Activated T-helper 1 cell treated with anti-CD3 and anti-CD28 coated beads, Interleukin-12 subunit alpha, Interleukin-12 subunit beta, Interleukin-2, Interleukin-4 antibody, amounts not matched to agents 30 ng/mL and 10 ng/mL and 1 ng/mL, durations not matched to agents 14 hours and 24 hours and 36 hours (primary cell): ENCODE measurements at regions of chr15 and their contacts with region 1.

Region 1: DNA sequence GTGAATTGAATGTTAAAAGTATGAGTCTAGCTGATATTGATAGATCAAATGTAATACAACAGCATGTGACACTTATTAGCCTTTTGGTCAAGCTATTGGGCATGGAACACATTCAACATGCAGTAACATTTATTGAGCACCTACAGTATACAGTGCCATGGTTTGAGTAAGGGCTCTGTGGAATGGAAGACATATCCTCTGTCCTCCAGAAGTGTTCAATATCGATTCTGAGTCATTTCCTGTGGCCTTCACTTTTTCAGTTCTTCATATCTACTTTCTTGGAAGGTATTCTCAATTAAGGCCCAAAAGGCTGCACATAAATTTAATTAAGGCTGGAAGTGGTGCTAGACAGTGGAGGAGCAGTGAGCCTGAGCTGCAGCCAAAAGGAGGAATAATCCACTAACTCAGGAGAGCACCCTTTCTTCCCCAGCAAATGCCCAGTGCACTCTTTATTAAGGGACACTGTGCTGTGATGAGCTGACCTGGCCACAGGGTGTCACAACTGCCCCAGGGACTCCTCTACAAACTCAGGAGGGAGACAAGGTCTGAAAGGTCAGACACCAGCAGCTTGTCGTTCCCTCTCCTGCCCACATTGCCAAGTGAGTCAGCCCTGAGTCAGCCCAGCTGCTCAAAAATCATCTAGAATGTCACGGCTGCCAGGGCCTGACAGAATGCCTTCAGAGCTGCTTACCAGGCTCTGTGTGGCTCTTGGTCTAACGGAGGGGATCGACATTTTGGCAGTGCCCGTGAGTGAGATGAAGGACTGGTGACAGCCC is 544.8 kb downstream of the AGBL1 start:
- DNase-seq: peak; percentile 20
- H3K4me3 Mint-ChIP-seq: peak overlapping the region; percentile 16
- H3K27ac Mint-ChIP-seq: no peak overlapping the region
- H3K4me1 Mint-ChIP-seq: peaks cover 17% of the 10 kb centered on the region
- H3K27me3 Mint-ChIP-seq: peaks cover 5% of the 10 kb centered on the region

Region 2: DNA sequence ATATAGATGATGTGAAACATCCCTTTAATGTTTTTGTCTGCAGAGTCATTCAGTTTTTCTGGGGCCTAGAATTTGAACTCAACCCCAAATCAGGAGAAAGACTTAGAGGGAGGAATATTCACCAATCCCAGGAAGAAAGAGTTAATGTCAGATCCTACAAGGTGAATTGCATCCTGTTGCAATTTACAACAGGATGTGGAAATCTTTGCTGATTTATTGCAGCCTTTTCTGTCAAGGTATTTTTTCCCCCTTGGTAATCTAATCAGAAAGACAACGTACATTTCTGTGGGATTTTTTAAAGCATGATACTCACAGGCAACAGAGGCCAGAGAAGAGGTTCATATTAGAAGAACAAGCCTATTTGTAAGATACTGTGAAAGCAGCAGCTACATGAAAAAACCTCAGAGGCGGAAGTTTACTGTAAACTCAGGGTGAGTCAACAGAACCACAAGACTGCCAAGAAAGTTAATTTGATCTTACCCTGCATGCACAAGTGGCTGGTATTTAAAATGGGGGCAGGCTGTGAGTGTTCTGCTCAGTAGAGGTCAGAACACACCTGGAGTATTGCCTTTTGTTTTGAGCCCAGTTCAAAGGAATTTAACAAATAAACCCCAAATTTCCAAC is 12.9 kb before region 1 on chr15:
- intact Hi-C with region 1: loop called (anchors 1 kb)
- DNase-seq: peak; percentile 36
- H3K4me3 Mint-ChIP-seq: no peak overlapping the region
- H3K27ac Mint-ChIP-seq: peak overlapping the region; percentile 47
- H3K4me1 Mint-ChIP-seq: peaks cover 42% of the 10 kb centered on the region
- H3K27me3 Mint-ChIP-seq: no peaks in the 10 kb centered on the region

Region 3: DNA sequence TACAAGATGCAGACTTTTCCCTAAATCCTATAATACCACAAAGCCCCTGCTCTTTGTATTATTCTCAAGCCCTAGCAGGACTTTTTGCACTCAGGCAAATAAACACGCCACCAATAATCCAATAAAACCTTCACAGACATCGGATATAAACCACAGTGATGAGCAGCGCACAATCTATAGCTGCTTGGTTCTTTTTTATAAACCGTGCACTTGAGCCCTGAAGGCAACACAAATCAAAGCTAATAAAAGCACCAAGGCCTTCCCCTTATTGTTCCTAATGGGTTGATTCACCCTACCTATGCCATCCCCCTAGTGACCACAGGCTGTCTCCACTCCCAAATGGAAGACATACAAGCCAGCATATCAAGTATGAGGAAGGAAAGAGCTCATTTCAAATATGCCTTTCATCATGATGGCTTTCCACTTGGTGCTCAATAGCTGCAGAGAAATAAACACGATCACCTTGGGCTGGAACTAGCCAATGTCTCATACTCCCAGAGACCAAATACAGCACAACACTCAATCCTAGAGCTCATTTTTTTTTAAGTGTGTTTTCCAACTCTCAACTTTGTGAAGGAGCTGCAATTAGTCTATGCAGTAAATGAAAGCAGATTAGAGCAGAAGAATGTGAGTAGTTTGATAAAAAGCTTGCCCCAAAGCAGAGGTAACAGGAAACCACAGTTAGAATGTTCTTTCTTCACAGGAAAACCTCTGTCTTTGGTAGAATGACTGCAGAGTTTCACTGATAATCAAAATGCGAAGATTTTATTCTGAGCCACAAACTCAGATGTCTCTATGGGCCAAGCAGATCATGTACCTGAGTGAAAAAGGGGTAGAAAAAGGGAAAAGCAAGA is 29.1 kb after region 1 on chr15:
- intact Hi-C with region 1: loop called (anchors 1 kb)
- DNase-seq: no peak
- H3K4me3 Mint-ChIP-seq: peak overlapping the region; percentile 34
- H3K27ac Mint-ChIP-seq: peak overlapping the region; percentile 88
- H3K4me1 Mint-ChIP-seq: peaks cover 37% of the 10 kb centered on the region
- H3K27me3 Mint-ChIP-seq: peaks cover 1% of the 10 kb centered on the region

Region 4: GRCh38 chr15:86677278-86677677 is 52.8 kb after region 1 on chr15:
- intact Hi-C with region 1: no loop called
- DNase-seq: no peak
- H3K4me3 Mint-ChIP-seq: no peak overlapping the region
- H3K27ac Mint-ChIP-seq: no peak overlapping the region
- H3K4me1 Mint-ChIP-seq: no peaks in the 10 kb centered on the region
- H3K27me3 Mint-ChIP-seq: no peaks in the 10 kb centered on the region

Region 5: GRCh38 chr15:86691091-86691663 is 66.7 kb after region 1 on chr15:
- intact Hi-C with region 1: loop called (anchors 10 kb)
- DNase-seq: no peak
- H3K4me3 Mint-ChIP-seq: no peak overlapping the region
- H3K27ac Mint-ChIP-seq: no peak overlapping the region
- H3K4me1 Mint-ChIP-seq: no peaks in the 10 kb centered on the region
- H3K27me3 Mint-ChIP-seq: no peaks in the 10 kb centered on the region

Region 6: DNA sequence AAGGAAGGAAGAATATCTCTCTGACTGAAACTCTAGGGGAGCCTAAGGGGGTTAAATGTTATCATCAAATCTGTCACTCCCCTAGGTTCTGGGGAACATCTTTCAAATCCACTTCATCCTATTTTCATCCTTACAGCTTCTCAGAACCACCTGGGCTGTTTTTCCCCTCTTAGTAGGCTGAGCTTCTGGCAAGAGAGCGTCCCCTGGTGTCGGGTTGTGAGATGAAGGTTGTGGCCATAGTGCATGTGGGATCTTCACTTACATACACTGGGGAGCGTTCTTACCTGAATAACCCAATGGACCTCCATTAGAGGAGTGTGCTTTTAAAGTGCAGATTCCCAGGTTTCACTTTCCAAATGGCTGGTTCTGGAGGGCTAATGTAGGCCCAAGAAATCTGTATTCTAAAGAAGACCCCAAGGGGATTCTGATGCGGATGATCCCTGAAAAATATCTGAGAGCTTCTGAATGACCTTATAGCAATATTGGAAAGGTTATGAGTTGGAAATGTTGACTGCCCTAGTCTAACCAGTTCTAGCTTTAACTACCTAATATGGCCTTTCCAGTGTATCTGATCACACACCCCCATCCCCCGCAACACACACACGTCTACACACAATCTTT is 118.9 kb after region 1 on chr15:
- intact Hi-C with region 1: loop called (anchors 1 kb)
- DNase-seq: peak; percentile 9
- H3K4me3 Mint-ChIP-seq: no peak overlapping the region
- H3K27ac Mint-ChIP-seq: no peak overlapping the region
- H3K4me1 Mint-ChIP-seq: no peaks in the 10 kb centered on the region
- H3K27me3 Mint-ChIP-seq: no peaks in the 10 kb centered on the region

Region 7: DNA sequence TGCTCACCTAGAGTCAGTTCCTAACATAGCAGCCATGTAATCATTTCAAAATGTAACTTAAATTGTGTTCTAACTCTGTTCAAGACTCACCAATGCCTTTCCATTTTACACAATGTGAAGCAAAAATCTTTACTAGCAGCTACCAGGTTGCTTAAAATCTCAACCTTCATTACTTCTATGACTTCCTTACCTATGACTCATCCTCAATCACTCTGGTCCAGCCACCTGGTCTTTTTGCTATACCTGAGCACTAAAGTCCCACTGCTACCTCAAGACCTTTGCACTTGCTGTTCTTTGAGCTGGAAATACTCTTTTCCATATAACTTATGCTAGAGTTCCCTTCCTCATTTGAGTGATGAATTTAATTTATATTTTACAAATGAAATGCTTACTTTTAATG is 638.8 kb after region 1 on chr15:
- intact Hi-C with region 1: no loop called
- DNase-seq: no peak
- H3K4me3 Mint-ChIP-seq: no peak overlapping the region
- H3K27ac Mint-ChIP-seq: no peak overlapping the region
- H3K4me1 Mint-ChIP-seq: no peaks in the 10 kb centered on the region
- H3K27me3 Mint-ChIP-seq: no peaks in the 10 kb centered on the region

Region 8: DNA sequence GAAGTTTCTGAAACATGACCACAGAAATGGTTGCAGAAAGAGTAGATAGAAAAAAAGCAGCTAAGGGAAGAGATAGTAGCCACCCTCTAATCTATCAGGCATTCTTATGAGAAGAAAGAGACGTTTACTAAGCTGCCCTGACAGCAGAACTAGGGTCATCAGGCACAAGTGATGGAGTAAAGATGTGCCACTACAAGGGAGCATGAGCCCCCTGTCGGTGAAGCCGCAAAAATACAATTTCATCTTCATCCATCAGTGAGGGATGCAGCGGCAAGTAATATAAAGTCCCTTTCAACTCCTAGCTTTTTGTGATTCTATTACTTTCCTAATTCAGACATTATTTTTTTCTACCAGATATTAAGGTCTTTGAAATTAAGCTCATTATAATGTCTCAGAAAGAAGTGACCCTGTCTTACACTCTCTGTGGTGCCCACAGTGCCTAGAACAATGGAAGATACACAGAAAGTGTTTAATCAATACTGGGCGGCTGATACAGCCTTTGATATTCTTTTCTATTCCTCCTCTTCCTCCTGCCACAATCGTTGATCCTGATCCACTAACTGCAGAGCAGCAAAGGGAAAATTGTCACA is 980.5 kb after region 1 on chr15:
- intact Hi-C with region 1: loop called (anchors 10 kb)
- DNase-seq: no peak
- H3K4me3 Mint-ChIP-seq: no peak overlapping the region
- H3K27ac Mint-ChIP-seq: no peak overlapping the region
- H3K4me1 Mint-ChIP-seq: no peaks in the 10 kb centered on the region
- H3K27me3 Mint-ChIP-seq: peaks cover 2% of the 10 kb centered on the region

Region 9: GRCh38 chr15:88246666-88247446 is 1622.4 kb after region 1 on chr15:
- intact Hi-C with region 1: loop called (anchors 5 kb)
- DNase-seq: peak; percentile 42
- H3K4me3 Mint-ChIP-seq: no peak overlapping the region
- H3K27ac Mint-ChIP-seq: no peak overlapping the region
- H3K4me1 Mint-ChIP-seq: no peaks in the 10 kb centered on the region
- H3K27me3 Mint-ChIP-seq: peaks cover 6% of the 10 kb centered on the region